Activated CD4-positive, alpha-beta T cell treated with anti-CD3 and anti-CD28 coated beads for 36 hours (primary cell): ENCODE measurements at regions of chr17 and their contacts with region 1.

Region 1: GRCh38 chr17:75855310-75856081 is at the start of gene WBP2:
- DNase-seq: peak; percentile 99
- ATAC-seq: peak; percentile 95
- H3K4me3 Mint-ChIP-seq: no peak within 1 kb of the TSS
- H3K27ac Mint-ChIP-seq: peak within 1 kb of the TSS; percentile 86
- H3K4me1 Mint-ChIP-seq: peaks cover 37% of the 10 kb centered on the region
- H3K27me3 Mint-ChIP-seq: no peaks in the 10 kb centered on the region
- total RNA-seq, gene WBP2: 68.7 to 74.1 TPM

Region 2: GRCh38 chr17:75261336-75262111 is 594.0 kb before region 1 on chr17 and contains the starts of genes GGA3 and MRPS7:
- CTCF ChIA-PET with region 1: no interaction called
- POLR2A ChIA-PET with region 1: no interaction called
- intact Hi-C with region 1: loop called in 1 of 2 experiments (anchors 10 kb)
- DNase-seq: peak; percentile 98
- ATAC-seq: peak; percentile 91
- H3K4me3 Mint-ChIP-seq: peak within 1 kb of the TSS; percentile 88
- H3K27ac Mint-ChIP-seq: peak within 1 kb of the TSS; percentile 96
- H3K4me1 Mint-ChIP-seq: peaks cover 48% of the 10 kb centered on the region
- H3K27me3 Mint-ChIP-seq: no peaks in the 10 kb centered on the region
- total RNA-seq, gene GGA3: 72.9 to 76.7 TPM
- total RNA-seq, gene MRPS7: 51.4 to 63.8 TPM

Region 3: DNA sequence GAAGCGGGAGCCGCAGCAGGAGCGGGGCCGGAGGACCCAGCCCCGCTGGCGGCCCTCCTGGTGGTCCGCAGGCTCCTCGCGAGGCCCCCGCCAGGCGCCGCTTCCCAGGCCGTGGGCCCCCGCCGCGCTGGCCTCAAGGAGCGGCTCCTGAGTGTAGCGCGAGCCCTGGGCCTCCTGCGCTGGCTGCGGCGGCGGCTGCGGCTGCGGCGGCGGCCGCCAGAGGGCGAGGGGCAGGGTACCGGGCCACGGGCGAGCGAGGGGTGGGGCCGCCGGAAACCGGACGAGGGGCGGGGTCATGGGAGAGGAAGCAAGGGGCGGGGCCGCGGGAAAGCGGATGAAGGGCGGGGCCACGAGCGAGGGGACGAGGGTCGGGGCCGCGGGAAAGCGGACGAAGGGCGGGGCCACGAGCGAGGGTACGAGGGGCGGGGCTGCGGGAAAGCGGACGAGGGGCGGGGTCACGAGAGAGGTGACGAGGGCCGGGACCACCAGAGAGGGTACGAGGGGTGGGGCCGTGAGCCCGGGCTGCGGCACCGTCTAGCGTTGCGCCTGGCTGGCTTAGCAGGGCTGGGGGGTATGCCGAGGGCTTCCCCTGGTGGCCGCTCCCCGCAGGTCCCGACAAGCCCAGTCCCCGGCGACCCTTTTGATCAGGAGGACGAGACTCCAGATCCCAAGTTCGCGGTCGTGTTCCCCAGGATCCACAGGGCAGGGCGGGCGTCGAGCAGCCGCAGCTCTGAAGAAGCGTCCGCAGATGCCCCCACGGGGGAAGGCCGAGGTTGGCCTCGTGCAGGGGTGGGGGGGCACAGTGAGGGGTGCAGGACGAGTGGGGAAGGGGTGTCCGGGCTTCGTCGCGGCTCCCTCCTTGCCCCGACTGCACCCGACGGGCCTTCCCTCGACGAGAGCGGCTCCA is 266.2 kb before region 1 on chr17:
- CTCF ChIA-PET with region 1: no interaction called
- POLR2A ChIA-PET with region 1: no interaction called
- intact Hi-C with region 1: loop called in 1 of 2 experiments (anchors 1 kb)
- DNase-seq: peak; percentile 99
- ATAC-seq: peak; percentile 90
- H3K4me3 Mint-ChIP-seq: peak overlapping the region; percentile 72
- H3K27ac Mint-ChIP-seq: peak overlapping the region; percentile 42
- H3K4me1 Mint-ChIP-seq: no peaks in the 10 kb centered on the region
- H3K27me3 Mint-ChIP-seq: peaks cover 2% of the 10 kb centered on the region

Region 4: DNA sequence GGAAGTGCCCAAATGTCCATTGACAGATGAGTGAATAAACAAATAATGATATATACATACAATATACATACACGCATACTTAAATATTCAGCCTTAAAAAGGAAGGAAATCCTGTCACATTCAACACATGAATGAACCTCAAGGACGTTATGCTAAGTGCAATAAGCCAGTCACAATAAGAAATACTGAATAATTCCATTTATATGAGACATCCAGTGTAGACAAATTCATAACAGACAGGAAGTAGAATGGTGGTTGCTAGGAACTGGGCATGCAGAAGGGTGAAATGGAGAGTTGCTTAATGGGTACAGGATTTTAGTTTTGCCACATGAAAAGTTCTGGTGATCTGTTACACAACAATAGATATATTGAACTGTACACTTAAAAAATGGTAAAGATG is 143.1 kb before region 1 on chr17:
- CTCF ChIA-PET with region 1: no interaction called
- POLR2A ChIA-PET with region 1: no interaction called
- intact Hi-C with region 1: no loop called
- DNase-seq: no peak
- ATAC-seq: no peak
- H3K4me3 Mint-ChIP-seq: no peak overlapping the region
- H3K27ac Mint-ChIP-seq: no peak overlapping the region
- H3K4me1 Mint-ChIP-seq: no peaks in the 10 kb centered on the region
- H3K27me3 Mint-ChIP-seq: peaks cover 3% of the 10 kb centered on the region

Region 5: DNA sequence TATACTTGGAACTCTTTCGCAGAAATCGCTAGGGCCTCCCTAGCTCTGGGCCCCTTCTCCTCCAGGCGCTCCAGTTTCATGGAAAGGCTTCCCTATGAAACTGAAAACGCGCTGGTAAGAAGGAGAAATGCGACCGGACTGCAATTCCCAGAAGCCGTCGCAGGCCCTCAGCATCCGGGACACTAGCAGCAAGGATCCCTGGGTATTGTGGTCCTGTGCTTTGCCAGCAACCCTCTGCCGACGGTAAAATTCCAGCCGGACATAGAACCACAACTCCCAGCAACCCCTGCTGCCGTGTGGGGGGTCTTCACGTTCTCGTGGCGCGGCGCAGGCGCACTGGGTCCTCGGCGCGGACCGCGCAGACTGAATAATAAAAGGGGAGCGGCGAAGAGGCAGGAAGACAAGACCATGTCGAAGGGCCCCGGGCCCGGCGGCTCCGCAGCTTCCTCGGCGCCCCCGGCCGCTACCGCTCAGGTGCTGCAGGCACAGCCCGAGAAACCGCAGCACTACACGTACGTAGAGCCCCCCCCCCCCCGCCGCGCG is 71.0 kb before region 1 on chr17 and contains the start of gene UNK:
- CTCF ChIA-PET with region 1: interaction called, 13 read pairs
- POLR2A ChIA-PET with region 1: interaction called, 25 read pairs
- intact Hi-C with region 1: loop called (anchors 1 kb)
- DNase-seq: peak; percentile 97
- ATAC-seq: peak; percentile 67
- H3K4me3 Mint-ChIP-seq: peak within 1 kb of the TSS; percentile 91
- H3K27ac Mint-ChIP-seq: peak within 1 kb of the TSS; percentile 100
- H3K4me1 Mint-ChIP-seq: peaks cover 55% of the 10 kb centered on the region
- H3K27me3 Mint-ChIP-seq: peaks cover 1% of the 10 kb centered on the region
- total RNA-seq, gene UNK: 24.5 to 33.7 TPM

Region 6: DNA sequence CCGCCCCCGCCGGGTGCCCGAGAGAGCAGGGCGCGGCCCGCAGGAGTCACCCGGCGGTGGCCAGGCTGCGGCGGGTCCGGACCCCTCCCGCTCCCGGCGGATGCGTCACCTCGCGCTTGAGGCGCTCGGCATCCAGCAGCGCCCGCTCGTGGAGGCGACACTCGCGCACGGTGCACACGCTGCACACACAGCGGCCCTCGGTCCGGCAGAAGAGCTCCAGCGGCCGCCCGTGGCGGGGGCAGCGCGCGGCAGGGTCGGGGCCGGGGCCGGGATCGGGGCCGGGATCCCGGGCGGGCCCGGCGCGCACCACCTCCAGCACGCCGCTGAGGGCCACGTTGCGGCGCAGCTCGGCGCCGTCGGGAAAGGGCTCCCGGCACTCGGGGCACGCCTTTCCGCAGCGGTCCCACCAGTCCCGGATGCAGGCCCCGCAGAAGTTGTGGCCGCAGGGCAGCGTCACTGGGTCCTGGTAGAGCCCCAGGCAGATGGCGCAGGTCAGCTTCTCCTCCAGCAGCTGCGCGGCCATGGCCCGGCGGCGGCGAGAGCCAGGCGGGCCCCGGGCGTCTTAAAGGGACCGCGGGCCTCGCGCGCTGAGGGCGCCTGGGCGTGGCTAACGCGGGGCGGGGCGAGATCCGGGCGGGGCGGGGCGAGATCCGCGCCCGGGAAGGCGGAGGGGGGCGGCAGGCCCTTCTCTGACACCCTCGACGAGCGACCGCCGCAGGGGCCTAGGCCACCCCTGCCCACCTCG is 41.1 kb after region 1 on chr17 and contains the start of gene TRIM65:
- CTCF ChIA-PET with region 1: interaction called, 17 read pairs
- POLR2A ChIA-PET with region 1: no interaction called
- intact Hi-C with region 1: loop called in 1 of 2 experiments (anchors 1 kb)
- DNase-seq: peak; percentile 86
- ATAC-seq: peak; percentile 85
- H3K4me3 Mint-ChIP-seq: peak within 1 kb of the TSS; percentile 84
- H3K27ac Mint-ChIP-seq: peak within 1 kb of the TSS; percentile 72
- H3K4me1 Mint-ChIP-seq: peaks cover 19% of the 10 kb centered on the region
- H3K27me3 Mint-ChIP-seq: no peaks in the 10 kb centered on the region
- total RNA-seq, gene TRIM65: 28.9 to 31.9 TPM

Region 7: GRCh38 chr17:76264755-76265596 is 409.5 kb after region 1 on chr17 and contains the start of gene UBALD2:
- CTCF ChIA-PET with region 1: no interaction called
- POLR2A ChIA-PET with region 1: no interaction called
- intact Hi-C with region 1: loop called in 1 of 2 experiments (anchors 5 kb)
- DNase-seq: peak; percentile 99
- ATAC-seq: peak; percentile 81
- H3K4me3 Mint-ChIP-seq: peak within 1 kb of the TSS; percentile 96
- H3K27ac Mint-ChIP-seq: peak within 1 kb of the TSS; percentile 100
- H3K4me1 Mint-ChIP-seq: peaks cover 52% of the 10 kb centered on the region
- H3K27me3 Mint-ChIP-seq: no peaks in the 10 kb centered on the region
- total RNA-seq, gene UBALD2: 299 to 639 TPM